Transverse colon (tissue), 4 donors: ENCODE measurements at regions of chr15 and their contacts with region 1.

Region 1: DNA sequence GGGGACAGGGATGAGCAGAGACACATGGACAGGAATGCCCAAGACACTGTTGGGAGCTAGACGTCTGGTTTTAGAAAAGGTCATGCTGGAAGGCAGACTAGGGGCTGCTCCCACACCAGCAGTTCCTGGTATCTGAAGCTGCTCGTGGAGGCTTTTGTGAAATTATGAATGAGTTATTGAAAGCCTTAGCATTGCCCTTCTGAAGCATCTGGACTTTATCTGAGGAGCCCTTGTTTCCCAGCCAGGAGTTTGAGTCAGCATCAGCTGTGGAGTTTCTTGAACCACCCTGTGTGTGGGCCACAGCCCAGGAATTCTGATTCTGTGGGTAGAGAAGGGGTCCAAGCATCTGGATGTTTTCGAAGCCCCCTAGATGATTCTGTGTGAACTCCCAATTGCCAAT is 258.7 kb downstream of the SLCO3A1 start:
- DNase-seq: no peak
- H3K4me3 ChIP-seq: no peak overlapping the region
- H3K27ac ChIP-seq: no peak overlapping the region
- H3K4me1 ChIP-seq: no peaks in the 10 kb centered on the region
- H3K27me3 ChIP-seq: no peaks in the 10 kb centered on the region
- CTCF ChIP-seq: no peak
- EP300 ChIP-seq: no peak
- POLR2A ChIP-seq: no peak

Region 2: GRCh38 chr15:92217896-92218295 is 105.7 kb after region 1 on chr15:
- in situ Hi-C with region 1: loop called in 1 of 4 experiments (anchors 10 kb)
- intact Hi-C with region 1: no loop called
- DNase-seq: no peak
- H3K4me3 ChIP-seq: no peak overlapping the region
- H3K27ac ChIP-seq: no peak overlapping the region
- H3K4me1 ChIP-seq: no peaks in the 10 kb centered on the region
- H3K27me3 ChIP-seq: no peaks in the 10 kb centered on the region
- CTCF ChIP-seq: no peak
- EP300 ChIP-seq: no peak
- POLR2A ChIP-seq: no peak

Region 3: GRCh38 chr15:92244703-92245102 is 132.5 kb after region 1 on chr15:
- in situ Hi-C with region 1: no loop called
- intact Hi-C with region 1: no loop called
- DNase-seq: no peak
- H3K4me3 ChIP-seq: no peak overlapping the region
- H3K27ac ChIP-seq: no peak overlapping the region
- H3K4me1 ChIP-seq: no peaks in the 10 kb centered on the region
- H3K27me3 ChIP-seq: peaks cover 9% of the 10 kb centered on the region
- CTCF ChIP-seq: no peak
- EP300 ChIP-seq: no peak
- POLR2A ChIP-seq: no peak